ENCODE measurements at regions of chr3 and their contacts with region 1.

Region 1: DNA sequence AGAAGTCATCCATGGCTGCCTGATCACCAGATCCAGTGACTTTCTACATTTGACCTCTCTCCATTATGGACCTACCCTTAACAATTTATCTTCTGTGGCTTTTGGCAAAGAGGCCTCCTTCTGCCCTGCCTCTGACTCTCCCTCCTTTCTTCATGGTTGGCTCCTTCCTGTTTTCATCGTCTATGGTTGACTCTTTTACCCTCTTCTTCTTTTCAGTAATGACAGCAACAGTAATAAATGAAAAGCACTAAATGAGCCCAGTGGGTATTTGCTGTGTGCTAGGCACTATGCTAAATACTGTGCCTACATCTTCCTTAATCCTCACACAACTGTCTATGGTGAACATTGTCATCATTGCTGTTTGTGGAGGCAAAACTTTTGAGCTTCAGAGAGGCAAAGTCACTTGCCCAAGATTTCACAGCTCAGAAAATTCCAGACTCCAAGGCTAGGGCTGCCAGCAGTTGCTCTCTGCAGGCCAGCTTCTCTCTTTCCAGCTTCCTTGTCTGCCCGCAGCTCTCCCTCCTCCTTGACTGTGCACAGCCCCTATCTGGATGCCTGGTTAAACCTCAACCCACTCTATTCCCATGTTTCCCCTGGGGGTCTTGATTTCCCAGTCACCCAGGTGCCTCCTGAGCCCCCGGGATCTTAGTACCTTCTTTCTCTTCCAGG is 24.6 kb downstream of the ITPR1 start:
- DNase-seq: no peak

Region 2: DNA sequence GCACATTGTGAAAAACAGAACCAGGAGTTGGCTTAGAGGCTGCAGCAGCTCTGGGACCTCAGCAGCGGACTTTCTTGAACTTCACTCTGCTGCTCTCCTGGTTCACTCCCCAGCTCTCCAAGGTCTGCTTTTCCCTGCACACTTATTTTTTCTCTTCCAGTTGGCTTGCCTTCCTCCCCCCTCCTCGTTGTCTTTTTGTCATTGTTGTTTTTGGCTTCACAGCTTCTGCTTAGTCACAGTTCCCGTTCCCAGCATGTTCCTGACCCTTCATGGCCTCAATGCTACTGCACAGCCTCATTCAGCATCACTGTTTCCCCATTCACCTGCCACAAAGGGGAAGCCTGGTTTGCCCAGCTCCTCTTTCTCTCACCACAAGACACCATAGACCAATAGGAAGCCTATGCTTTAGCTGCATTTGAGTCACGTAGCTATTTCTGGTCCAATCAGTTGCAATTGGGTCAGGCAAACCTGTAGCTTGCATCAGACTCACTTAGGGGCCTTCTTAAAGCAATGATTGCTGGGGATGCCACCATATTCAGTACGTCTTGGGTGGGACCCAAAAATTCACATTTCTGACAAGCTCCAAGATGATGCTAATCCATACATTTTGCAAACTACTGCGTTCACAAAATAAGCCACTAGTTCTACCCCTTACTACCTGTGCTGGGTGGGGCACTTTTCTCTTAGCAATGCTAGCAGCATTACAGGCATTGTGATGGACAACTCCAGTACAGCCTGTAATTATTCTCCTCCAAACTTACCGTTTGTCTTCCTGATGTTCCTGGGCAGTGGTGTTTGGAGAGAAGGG is 42.9 kb before region 1 on chr3:
- intact Hi-C with region 1: loop called (anchors 5 kb)
- DNase-seq: peak; percentile 90